ENCODE measurements at regions of chr12 and their contacts with region 1.

Region 1: GRCh38 chr12:49428793-49429192 is 61.5 kb downstream of the SPATS2 start:
- DNase-seq: peak; percentile 82
- H3K4me3 ChIP-seq: no peak overlapping the region
- H3K27ac ChIP-seq: no peak overlapping the region
- H3K4me1 ChIP-seq: peaks cover 18% of the 10 kb centered on the region
- H3K27me3 ChIP-seq: no peaks in the 10 kb centered on the region
- CTCF ChIP-seq: no peak

Region 2: DNA sequence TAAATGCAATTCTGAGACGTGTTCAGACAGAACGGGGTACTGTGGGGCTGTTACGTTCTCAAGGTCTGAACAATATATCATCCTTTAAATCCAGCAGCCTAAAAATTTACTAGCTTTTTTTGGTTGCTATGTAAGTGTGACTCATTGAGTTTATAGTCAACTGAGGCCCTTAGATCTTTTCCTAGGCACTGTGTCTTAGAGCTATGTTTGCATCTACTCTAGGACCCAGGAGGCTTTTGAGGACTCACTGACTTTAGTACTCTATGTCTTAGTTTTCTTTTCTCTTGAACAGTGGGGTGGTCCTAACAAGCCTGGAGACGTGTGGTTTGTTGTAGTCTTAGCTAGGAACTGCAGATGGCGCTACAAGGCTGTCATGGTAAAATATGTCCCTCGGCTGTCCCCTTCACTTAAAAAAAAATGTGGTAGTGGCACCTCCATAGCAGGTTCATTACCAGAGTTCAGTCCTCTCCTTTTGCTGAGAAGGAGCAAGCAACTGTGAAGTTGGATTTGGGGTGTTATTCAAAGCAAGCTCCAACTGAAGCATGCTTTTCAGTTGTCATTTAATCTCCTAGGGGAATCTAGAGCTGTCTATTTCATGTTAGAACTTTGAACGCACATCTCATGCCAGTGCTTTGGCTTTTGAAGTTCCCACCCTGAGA is 70.2 kb before region 1 on chr12:
- CTCF ChIA-PET with region 1: no interaction called
- POLR2A ChIA-PET with region 1: no interaction called
- intact Hi-C with region 1: no loop called
- DNase-seq: peak; percentile 89
- H3K4me3 ChIP-seq: peak overlapping the region; percentile 5
- H3K27ac ChIP-seq: no peak overlapping the region
- H3K4me1 ChIP-seq: peaks cover 5% of the 10 kb centered on the region
- H3K27me3 ChIP-seq: no peaks in the 10 kb centered on the region
- CTCF ChIP-seq: peak; percentile 89

Region 3: GRCh38 chr12:49740930-49741881 is 312.4 kb after region 1 on chr12 and contains the start of gene TMBIM6:
- CTCF ChIA-PET with region 1: no interaction called
- POLR2A ChIA-PET with region 1: no interaction called
- intact Hi-C with region 1: no loop called
- DNase-seq: peak; percentile 100
- H3K4me3 ChIP-seq: peak within 1 kb of the TSS; percentile 91
- H3K27ac ChIP-seq: peak within 1 kb of the TSS; percentile 95
- H3K4me1 ChIP-seq: peaks cover 14% of the 10 kb centered on the region
- H3K27me3 ChIP-seq: no peaks in the 10 kb centered on the region
- CTCF ChIP-seq: peak; percentile 98
- total RNA-seq, gene TMBIM6: 425 and 454 TPM in 2 replicates

Region 4: GRCh38 chr12:49975318-49975761 is 546.5 kb after region 1 on chr12:
- CTCF ChIA-PET with region 1: no interaction called
- POLR2A ChIA-PET with region 1: interaction called, 22 read pairs
- intact Hi-C with region 1: no loop called
- DNase-seq: no peak
- H3K4me3 ChIP-seq: no peak overlapping the region
- H3K27ac ChIP-seq: no peak overlapping the region
- H3K4me1 ChIP-seq: no peaks in the 10 kb centered on the region
- H3K27me3 ChIP-seq: no peaks in the 10 kb centered on the region
- CTCF ChIP-seq: no peak